ENCODE measurements at regions of chr19 and their contacts with region 1.

Region 1: GRCh38 chr19:35931161-35931873 is 4.9 kb upstream of the LRFN3 start:
- DNase-seq: peak; percentile 100
- H3K4me3 Mint-ChIP-seq: peak overlapping the region; percentile 69
- H3K27ac Mint-ChIP-seq: peak overlapping the region; percentile 58
- H3K4me1 Mint-ChIP-seq: peaks cover 16% of the 10 kb centered on the region
- H3K27me3 Mint-ChIP-seq: peaks cover 16% of the 10 kb centered on the region
- CTCF ChIP-seq: peak; percentile 89

Region 2: DNA sequence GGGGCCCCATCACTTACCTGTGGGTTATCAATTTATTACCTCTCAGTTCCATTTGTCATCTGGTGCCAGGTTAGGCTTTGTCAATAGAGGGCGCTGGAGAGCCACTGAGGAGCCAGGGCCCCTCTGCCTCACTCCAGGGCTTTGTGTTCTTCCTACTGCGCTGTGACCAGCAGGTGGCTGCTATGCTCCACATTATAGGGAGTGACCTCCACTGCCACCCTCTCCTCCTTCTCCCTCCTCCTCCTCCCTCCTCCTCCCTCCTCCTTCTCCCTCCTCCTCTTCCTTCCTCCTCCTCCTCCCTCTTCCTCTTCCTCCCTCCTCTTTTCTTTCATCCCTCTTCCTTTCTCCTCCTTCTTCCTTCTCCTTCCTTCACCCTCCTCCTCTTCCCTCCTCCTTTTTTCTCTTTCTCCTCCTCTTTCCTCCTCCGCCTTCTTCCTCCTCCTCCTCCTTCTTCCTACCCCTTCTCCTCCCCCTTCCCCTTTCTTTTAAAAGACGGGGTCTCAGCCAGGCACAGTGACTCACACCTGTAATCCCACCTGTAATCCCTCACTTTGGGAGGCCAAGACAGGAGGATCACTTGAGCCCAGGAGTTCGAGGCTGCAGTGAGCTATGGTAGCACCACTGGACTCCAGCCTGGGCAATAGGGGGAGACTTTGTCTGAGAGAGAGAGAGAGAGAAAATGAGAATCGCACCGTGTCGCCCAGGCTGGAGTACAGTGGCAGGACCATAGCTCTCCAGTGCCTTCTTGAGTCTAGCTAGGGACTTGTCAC is 237.3 kb before region 1 on chr19:
- CTCF ChIA-PET with region 1: interaction called, 5 read pairs
- intact Hi-C with region 1: loop called (anchors 1 kb)
- DNase-seq: peak; percentile 94
- H3K4me3 Mint-ChIP-seq: no peak overlapping the region
- H3K27ac Mint-ChIP-seq: no peak overlapping the region
- H3K4me1 Mint-ChIP-seq: peaks cover 8% of the 10 kb centered on the region
- H3K27me3 Mint-ChIP-seq: no peaks in the 10 kb centered on the region
- CTCF ChIP-seq: peak; percentile 99

Region 3: GRCh38 chr19:35740423-35741202 is 190.7 kb before region 1 on chr19:
- CTCF ChIA-PET with region 1: interaction called, 7 read pairs
- intact Hi-C with region 1: loop called (anchors 10 kb)
- DNase-seq: peak; percentile 99
- H3K4me3 Mint-ChIP-seq: peak overlapping the region; percentile 97
- H3K27ac Mint-ChIP-seq: peak overlapping the region; percentile 89
- H3K4me1 Mint-ChIP-seq: peaks cover 20% of the 10 kb centered on the region
- H3K27me3 Mint-ChIP-seq: no peaks in the 10 kb centered on the region
- CTCF ChIP-seq: no peak

Region 4: DNA sequence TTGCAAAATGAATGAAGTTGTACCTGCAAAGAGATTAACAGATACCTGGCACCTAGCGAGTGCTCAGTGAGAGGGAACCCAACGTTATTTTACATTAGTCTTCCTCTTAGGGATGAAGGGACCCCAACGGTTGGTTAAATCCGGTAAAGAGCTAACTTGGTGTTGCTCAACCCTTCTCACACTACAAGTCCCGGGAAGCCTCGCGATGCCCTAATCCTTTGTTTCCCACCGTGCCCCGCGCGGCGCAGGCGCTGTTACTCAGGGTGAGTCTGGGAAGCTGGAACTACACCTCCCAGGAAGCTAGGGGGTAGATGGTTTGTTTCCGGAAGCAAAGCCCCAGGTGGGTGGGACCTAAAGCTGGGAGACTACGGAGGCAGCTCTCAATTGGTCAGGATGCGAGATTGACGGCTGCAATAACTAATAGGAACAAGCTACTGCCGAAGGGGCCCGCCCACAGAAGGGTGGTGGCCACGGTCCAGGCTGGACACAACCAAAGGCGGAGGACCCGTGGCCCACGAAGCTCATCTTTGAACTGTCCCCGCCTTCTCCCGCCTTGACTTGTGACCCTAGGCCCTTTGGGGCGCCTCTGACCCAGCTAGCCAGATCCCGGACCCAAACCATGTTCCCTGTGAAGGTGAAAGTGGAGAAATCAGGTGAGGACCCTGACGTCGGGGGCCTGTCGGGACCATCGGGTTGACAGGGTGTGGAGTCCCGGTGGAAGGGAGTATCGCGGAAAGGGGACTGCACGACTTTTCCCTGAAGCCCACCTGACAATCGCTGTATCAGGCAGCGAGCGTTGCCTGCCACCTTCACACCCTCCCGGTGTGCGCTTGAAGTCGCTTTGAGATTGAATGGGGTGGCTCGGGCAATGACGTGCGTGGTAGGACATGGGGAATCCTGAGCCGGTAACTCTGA is 183.0 kb before region 1 on chr19 and contains the start of gene LIN37:
- CTCF ChIA-PET with region 1: interaction called, 12 read pairs
- intact Hi-C with region 1: loop called (anchors 10 kb)
- DNase-seq: peak; percentile 99
- H3K4me3 Mint-ChIP-seq: peak within 1 kb of the TSS; percentile 90
- H3K27ac Mint-ChIP-seq: peak within 1 kb of the TSS; percentile 93
- H3K4me1 Mint-ChIP-seq: peaks cover 45% of the 10 kb centered on the region
- H3K27me3 Mint-ChIP-seq: no peaks in the 10 kb centered on the region
- CTCF ChIP-seq: no peak
- total RNA-seq, gene LIN37: 12.4 and 15.9 TPM in 2 replicates

Region 5: DNA sequence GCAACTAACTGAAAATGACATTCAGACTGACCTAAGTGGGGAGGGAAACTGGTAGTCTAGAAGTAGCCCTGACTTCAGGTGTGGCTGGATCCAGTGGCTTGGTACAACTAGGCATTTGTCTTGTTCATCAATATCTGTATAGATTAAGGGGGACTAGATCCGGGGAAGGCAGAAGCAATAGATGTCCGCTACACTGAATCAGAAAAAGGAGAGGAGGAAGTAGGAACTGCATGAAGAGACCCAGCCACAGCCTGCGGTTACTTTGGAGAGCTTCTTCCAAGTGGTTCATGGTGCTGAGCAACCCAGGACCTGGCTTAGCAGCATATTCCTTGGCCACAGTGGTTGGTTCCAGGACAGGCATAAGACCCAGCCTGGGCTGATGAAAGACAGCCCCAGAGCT is 108.7 kb before region 1 on chr19:
- CTCF ChIA-PET with region 1: interaction called, 12 read pairs
- intact Hi-C with region 1: no loop called
- DNase-seq: no peak
- H3K4me3 Mint-ChIP-seq: no peak overlapping the region
- H3K27ac Mint-ChIP-seq: no peak overlapping the region
- H3K4me1 Mint-ChIP-seq: no peaks in the 10 kb centered on the region
- H3K27me3 Mint-ChIP-seq: peaks cover 77% of the 10 kb centered on the region
- CTCF ChIP-seq: no peak

Region 6: GRCh38 chr19:35882114-35882832 is 49.0 kb before region 1 on chr19:
- CTCF ChIA-PET with region 1: interaction called, 20 read pairs
- intact Hi-C with region 1: loop called (anchors 1 kb)
- DNase-seq: peak; percentile 61
- H3K4me3 Mint-ChIP-seq: no peak overlapping the region
- H3K27ac Mint-ChIP-seq: no peak overlapping the region
- H3K4me1 Mint-ChIP-seq: peaks cover 7% of the 10 kb centered on the region
- H3K27me3 Mint-ChIP-seq: peaks cover 30% of the 10 kb centered on the region
- CTCF ChIP-seq: peak; percentile 38

Region 7: DNA sequence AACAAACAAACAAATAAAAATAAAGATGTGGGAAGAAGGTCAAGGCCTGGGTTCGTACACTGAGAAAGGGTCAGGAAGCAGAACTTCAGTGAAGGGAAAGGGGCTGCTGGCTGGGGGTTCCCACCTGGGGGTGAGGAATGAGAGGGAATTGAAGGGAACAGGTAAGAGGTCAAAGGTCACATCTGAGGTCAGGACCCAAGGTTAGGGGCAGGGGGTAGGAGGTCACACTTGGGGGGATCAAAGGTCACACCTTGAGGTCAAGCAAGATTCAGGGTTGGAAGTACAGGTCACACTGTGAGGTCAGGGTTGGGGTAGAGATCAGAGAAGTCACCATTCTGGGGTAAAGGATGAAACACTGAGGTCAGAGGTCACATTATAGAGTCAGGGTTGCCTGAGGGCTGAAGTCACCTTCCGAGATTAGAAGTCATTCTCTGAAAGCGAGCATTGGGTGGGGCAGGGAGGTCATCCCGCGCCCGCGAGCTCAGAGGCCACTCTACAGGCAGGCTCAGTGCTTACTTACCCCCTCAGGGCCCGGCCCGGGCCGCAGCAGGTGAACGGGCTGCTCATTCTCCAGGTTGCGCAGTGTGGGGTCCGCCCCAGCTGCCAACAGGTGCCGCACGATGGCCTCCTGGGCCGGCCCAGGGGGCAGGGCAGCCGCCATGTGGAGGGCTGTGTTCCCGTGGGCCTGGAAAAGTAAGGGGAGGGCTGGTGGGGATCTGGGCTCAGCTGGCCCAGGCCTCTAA is 41.8 kb before region 1 on chr19:
- CTCF ChIA-PET with region 1: interaction called, 3 read pairs
- intact Hi-C with region 1: loop called (anchors 2 kb)
- DNase-seq: no peak
- H3K4me3 Mint-ChIP-seq: no peak overlapping the region
- H3K27ac Mint-ChIP-seq: no peak overlapping the region
- H3K4me1 Mint-ChIP-seq: no peaks in the 10 kb centered on the region
- H3K27me3 Mint-ChIP-seq: no peaks in the 10 kb centered on the region
- CTCF ChIP-seq: no peak

Region 8: DNA sequence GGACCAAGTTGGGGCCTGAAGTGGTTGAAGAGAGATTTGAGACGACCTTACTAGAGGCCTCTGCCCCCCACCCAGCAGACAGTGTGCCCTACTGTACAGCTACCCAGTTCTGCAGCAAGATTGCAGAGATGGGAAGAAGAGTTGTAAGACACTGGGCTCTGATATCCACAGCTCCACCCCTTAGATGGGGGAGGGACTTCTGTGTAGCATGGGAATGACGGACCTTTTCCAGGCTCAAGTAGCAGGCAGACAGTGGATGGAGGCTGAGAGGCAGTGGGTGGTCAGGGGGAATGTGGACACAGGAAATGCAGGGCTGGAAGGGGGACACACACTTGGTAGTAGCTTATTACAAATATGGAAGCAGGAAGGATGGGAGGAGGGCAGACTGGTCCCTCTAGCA is 17.8 kb after region 1 on chr19:
- CTCF ChIA-PET with region 1: no interaction called
- intact Hi-C with region 1: no loop called
- DNase-seq: no peak
- H3K4me3 Mint-ChIP-seq: no peak overlapping the region
- H3K27ac Mint-ChIP-seq: no peak overlapping the region
- H3K4me1 Mint-ChIP-seq: no peaks in the 10 kb centered on the region
- H3K27me3 Mint-ChIP-seq: peaks cover 64% of the 10 kb centered on the region
- CTCF ChIP-seq: no peak

Region 9: GRCh38 chr19:36115453-36116343 is 184.4 kb after region 1 on chr19 and contains the start of gene TBCB:
- CTCF ChIA-PET with region 1: no interaction called
- intact Hi-C with region 1: no loop called
- DNase-seq: no peak
- H3K4me3 Mint-ChIP-seq: peak within 1 kb of the TSS; percentile 90
- H3K27ac Mint-ChIP-seq: peak within 1 kb of the TSS; percentile 99
- H3K4me1 Mint-ChIP-seq: peaks cover 38% of the 10 kb centered on the region
- H3K27me3 Mint-ChIP-seq: peaks cover 12% of the 10 kb centered on the region
- CTCF ChIP-seq: no peak
- total RNA-seq, gene TBCB: 204 and 210 TPM in 2 replicates